PC-9 (cell line): ENCODE measurements at regions of chr11 and their contacts with region 1.

Region 1: GRCh38 chr11:93543292-93543977 is at the start of gene SMCO4:
- DNase-seq: peak; percentile 68 to 78
- H3K4me3 ChIP-seq: peak within 1 kb of the TSS; percentile 81
- H3K27ac ChIP-seq: no peak within 1 kb of the TSS
- H3K4me1 ChIP-seq: peaks cover 15% of the 10 kb centered on the region
- H3K27me3 ChIP-seq: no peaks in the 10 kb centered on the region
- CTCF ChIP-seq: peak; percentile 70
- total RNA-seq, gene SMCO4: 19.6 and 23.0 TPM in 2 replicates

Region 2: GRCh38 chr11:93234602-93235207 is 308.7 kb before region 1 on chr11:
- CTCF ChIA-PET with region 1: interaction called, 3 read pairs
- POLR2A ChIA-PET with region 1: no interaction called
- intact Hi-C with region 1: loop called (anchors 1 kb)
- DNase-seq: peak; percentile 70 to 74
- H3K4me3 ChIP-seq: no peak overlapping the region
- H3K27ac ChIP-seq: no peak overlapping the region
- H3K4me1 ChIP-seq: no peaks in the 10 kb centered on the region
- H3K27me3 ChIP-seq: no peaks in the 10 kb centered on the region
- CTCF ChIP-seq: peak; percentile 96

Region 3: GRCh38 chr11:93330446-93330984 is 212.9 kb before region 1 on chr11 and contains the start of gene DEUP1:
- CTCF ChIA-PET with region 1: no interaction called
- POLR2A ChIA-PET with region 1: no interaction called
- intact Hi-C with region 1: loop called (anchors 10 kb)
- DNase-seq: peak in 1 of 2 experiments; percentile 52
- H3K4me3 ChIP-seq: no peak within 1 kb of the TSS
- H3K27ac ChIP-seq: no peak within 1 kb of the TSS
- H3K4me1 ChIP-seq: no peaks in the 10 kb centered on the region
- H3K27me3 ChIP-seq: no peaks in the 10 kb centered on the region
- CTCF ChIP-seq: no peak
- total RNA-seq, gene DEUP1: not detected in 2 replicates

Region 4: GRCh38 chr11:93652161-93652597 is 108.7 kb after region 1 on chr11:
- CTCF ChIA-PET with region 1: no interaction called
- POLR2A ChIA-PET with region 1: no interaction called
- intact Hi-C with region 1: loop called (anchors 2 kb)
- DNase-seq: peak; percentile 22 to 53
- H3K4me3 ChIP-seq: no peak overlapping the region
- H3K27ac ChIP-seq: no peak overlapping the region
- H3K4me1 ChIP-seq: no peaks in the 10 kb centered on the region
- H3K27me3 ChIP-seq: peaks cover 6% of the 10 kb centered on the region; the same call in 1 of the 2 replicates
- CTCF ChIP-seq: peak; percentile 94